Endothelial cell of umbilical vein (primary cell): ENCODE measurements at regions of chr9 and their contacts with region 1.

Region 1: DNA sequence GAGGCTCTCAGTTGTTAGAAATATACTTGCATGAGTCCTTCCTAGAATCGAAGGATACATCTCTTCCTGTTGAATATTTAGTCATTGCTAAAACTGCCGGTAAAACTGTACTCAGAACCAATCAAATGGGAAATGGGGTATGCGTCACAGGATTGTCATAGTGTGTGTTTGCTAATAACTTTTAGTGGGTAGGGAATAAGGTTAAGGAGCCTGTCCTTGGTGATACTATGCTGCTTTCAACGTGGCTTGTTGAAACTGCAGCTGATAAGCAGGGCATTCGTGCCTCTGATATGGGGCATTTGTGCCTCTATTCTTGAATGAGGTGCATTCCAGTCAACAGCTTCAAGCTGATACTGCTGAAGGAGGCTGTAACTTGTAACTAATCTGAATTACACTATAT is 26.6 kb downstream of the HABP4 start:
- DNase-seq: peak; percentile 30
- H3K4me3 ChIP-seq: no peak overlapping the region
- H3K27ac ChIP-seq: no peak overlapping the region
- H3K4me1 ChIP-seq: no peaks in the 10 kb centered on the region
- H3K27me3 ChIP-seq: no peaks in the 10 kb centered on the region
- CTCF ChIP-seq: no peak
- POLR2A ChIP-seq: no peak

Region 2: GRCh38 chr9:96156171-96156974 is 320.2 kb before region 1 on chr9:
- CTCF ChIA-PET with region 1: no interaction called
- POLR2A ChIA-PET with region 1: no interaction called
- dilution Hi-C with region 1: no loop called
- intact Hi-C with region 1: no loop called
- DNase-seq: no peak
- H3K4me3 ChIP-seq: no peak overlapping the region
- H3K27ac ChIP-seq: no peak overlapping the region
- H3K4me1 ChIP-seq: peaks cover 12% of the 10 kb centered on the region
- H3K27me3 ChIP-seq: no peaks in the 10 kb centered on the region
- CTCF ChIP-seq: no peak
- POLR2A ChIP-seq: no peak

Region 3: DNA sequence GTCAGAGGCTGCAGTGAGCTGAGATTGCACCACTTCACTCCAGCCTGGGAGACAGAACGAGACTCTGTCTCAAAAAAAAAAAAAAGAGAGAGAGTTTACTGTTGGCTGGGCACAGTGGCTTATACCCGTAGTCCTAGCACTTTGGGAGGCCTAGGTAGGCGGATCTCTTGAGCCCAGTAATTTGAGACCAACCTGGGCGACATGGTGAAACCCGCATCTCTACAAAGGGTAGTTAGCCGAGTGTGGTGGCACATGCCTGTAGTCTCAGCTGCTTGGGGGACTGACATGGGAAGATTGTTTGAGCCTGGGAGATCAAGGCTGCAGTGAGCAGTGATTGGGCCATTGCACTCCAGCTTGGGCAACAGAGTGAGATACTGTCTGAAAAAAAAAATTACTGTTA is 14.1 kb before region 1 on chr9:
- CTCF ChIA-PET with region 1: no interaction called
- POLR2A ChIA-PET with region 1: no interaction called
- dilution Hi-C with region 1: no loop called
- intact Hi-C with region 1: loop called (anchors 1 kb)
- DNase-seq: no peak
- H3K4me3 ChIP-seq: no peak overlapping the region
- H3K27ac ChIP-seq: no peak overlapping the region
- H3K4me1 ChIP-seq: no peaks in the 10 kb centered on the region
- H3K27me3 ChIP-seq: no peaks in the 10 kb centered on the region
- CTCF ChIP-seq: no peak
- POLR2A ChIP-seq: no peak